Dorsolateral prefrontal cortex (tissue), 120 donors: ENCODE measurements at regions of chr17 and their contacts with region 1.

Region 1: GRCh38 chr17:1267471-1267947 is 2.7 kb upstream of the BHLHA9 start:
- DNase-seq: peak in 1 of 10 donors; percentile 76
- H3K4me3 ChIP-seq: peak overlapping the region; percentile 55 to 83 (median 71)
- H3K27ac ChIP-seq: peak overlapping the region in 54 of 59 donors; percentile 1 to 89 (median 76)
- H3K27me3 ChIP-seq: peaks cover 0 to 33% (median 14%) of the 10 kb centered on the region in 45 donors
- CTCF ChIP-seq: no peak

Region 2: GRCh38 chr17:1331708-1332107 is 64.2 kb after region 1 on chr17:
- intact Hi-C with region 1: loop called (anchors 5 to 10 kb)
- DNase-seq: peak in 1 of 10 donors; percentile 7
- H3K4me3 ChIP-seq: no peak overlapping the region
- H3K27ac ChIP-seq: no peak overlapping the region
- H3K27me3 ChIP-seq: no peaks in the 10 kb centered on the region
- CTCF ChIP-seq: no peak